ENCODE measurements at regions of chr19 and their contacts with region 1.

Region 1: DNA sequence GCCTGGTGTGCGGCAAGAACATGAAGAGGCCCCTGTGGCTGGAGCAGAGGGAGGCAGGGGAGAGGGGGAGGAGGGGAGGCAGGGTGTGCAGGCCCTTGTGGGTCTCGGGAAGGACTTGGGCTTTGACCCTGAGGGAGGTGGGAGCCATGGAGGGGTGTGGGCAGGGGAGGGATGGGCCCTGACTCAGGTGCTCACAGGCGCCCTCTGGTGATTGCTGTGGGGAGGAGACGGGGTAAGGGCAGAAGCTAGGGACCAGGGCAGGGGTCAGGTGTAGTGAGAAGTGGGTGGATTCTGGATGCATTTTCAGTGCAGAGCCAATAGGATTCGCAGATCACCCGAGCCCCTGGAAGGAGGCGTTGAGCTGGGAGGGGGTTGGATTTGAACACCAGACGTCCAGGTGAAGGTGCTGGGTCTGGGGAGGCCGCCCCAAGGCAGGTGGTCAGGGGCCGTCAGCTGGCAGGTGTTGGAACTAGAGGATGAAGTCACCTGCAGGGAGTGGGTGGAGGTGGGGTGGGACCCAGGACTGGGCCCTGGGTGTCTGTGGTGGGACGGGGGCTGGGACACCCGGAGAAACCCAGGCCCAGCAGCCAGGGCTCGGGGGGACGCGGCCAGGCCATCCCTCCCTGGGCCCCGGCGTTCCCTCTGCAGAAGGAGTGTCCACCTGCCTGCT is 185.4 kb downstream of the KDM4B start:
- DNase-seq: peak; percentile 82
- H3K4me3 ChIP-seq: no peak overlapping the region
- H3K27ac ChIP-seq: no peak overlapping the region
- H3K4me1 ChIP-seq: peaks cover 0 to 2% of the 10 kb centered on the region in 2 experiments; a peak in 1 of 4 replicates
- H3K27me3 ChIP-seq: no peaks in the 10 kb centered on the region
- CTCF ChIP-seq: peak; percentile 56
- EP300 ChIP-seq: no peak
- RAD21 ChIP-seq: peak; percentile 43

Region 2: GRCh38 chr19:5143471-5144411 is 10.5 kb before region 1 on chr19:
- CTCF ChIA-PET with region 1: interaction called, 11 read pairs
- POLR2A ChIA-PET with region 1: no interaction called
- DNase-seq: no peak
- H3K4me3 ChIP-seq: no peak overlapping the region
- H3K27ac ChIP-seq: no peak overlapping the region
- H3K4me1 ChIP-seq: peaks cover 0 to 11% of the 10 kb centered on the region in 2 experiments; a peak in 1 of 4 replicates
- H3K27me3 ChIP-seq: no peaks in the 10 kb centered on the region
- CTCF ChIP-seq: no peak
- EP300 ChIP-seq: no peak
- RAD21 ChIP-seq: no peak

Region 3: GRCh38 chr19:5170329-5170745 is 16.1 kb after region 1 on chr19:
- CTCF ChIA-PET with region 1: interaction called, 10 read pairs
- POLR2A ChIA-PET with region 1: no interaction called
- DNase-seq: peak; percentile 58
- H3K4me3 ChIP-seq: no peak overlapping the region; a peak in 1 of 4 replicates
- H3K27ac ChIP-seq: no peak overlapping the region
- H3K4me1 ChIP-seq: peaks cover 0 to 3% of the 10 kb centered on the region in 2 experiments; a peak in 1 of 4 replicates
- H3K27me3 ChIP-seq: no peaks in the 10 kb centered on the region
- CTCF ChIP-seq: peak; percentile 63
- EP300 ChIP-seq: no peak
- RAD21 ChIP-seq: 0 out of 2 replicates have a peak, but pooled peaks have one; percentile 15